Posterior cingulate gyrus (tissue), 11 donors: ENCODE measurements at regions of chr4 and their contacts with region 1.

Region 1: DNA sequence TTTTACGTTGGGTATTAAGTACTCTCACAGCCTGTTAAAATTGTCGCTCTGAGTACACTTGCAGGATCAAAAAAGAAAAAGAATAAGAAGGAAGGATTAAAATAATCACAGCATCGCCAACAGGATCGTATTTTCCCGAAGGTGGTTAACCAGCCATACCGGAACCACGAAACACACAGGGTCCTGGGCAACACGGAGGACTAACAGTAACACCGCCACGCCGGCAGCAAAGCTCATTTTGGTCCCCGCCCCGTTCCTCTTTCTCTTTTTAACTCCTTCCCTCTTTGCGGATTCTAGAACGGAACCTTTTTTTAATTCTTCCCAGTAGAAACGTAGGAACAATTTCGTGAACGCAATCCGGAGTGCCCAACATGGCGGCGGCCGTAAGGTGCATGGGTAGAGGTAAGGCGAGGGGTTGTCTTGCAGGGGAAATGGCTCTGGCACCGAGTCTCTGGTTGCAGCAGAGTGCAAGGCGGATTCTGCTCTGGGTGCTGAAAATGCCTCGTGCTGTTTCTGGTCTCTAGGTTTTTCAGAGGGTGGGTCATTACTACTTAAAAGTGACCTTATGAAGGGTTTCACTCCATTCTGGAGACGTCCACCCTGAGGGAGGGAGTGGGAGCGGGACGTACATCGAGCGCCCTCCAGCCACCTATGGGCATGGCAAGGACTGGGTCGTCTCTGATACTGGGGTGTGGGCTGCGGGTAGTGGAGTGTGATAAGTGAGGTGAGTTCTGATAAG is at the start of gene MRPL1:
- DNase-seq: peak; percentile 78 to 97 (median 86)

Region 2: DNA sequence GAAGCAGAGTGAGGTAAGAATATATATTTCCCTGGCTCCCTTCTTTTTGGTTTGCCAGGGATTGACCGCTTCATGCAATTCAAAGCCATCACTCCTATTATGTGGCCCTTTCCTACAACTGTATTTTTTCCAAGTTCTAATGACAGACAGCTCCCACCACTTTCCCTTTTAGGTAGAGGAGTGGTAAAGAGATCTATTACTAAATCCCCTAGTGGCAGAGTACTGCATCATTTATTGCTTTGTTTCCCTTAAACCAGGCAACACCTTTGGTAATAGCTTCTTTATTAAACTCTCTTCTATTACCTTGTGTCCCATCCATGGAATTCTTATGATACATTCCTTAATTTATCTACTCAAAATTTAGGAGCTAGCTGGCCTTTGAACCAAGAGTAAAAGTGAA is 134.2 kb before region 1 on chr4:
- intact Hi-C with region 1: no loop called
- DNase-seq: no peak

Region 3: GRCh38 chr4:77819843-77820648 is 42.6 kb before region 1 on chr4:
- intact Hi-C with region 1: loop called (anchors 2 kb)
- DNase-seq: peak; percentile 90 to 99 (median 94)

Region 4: DNA sequence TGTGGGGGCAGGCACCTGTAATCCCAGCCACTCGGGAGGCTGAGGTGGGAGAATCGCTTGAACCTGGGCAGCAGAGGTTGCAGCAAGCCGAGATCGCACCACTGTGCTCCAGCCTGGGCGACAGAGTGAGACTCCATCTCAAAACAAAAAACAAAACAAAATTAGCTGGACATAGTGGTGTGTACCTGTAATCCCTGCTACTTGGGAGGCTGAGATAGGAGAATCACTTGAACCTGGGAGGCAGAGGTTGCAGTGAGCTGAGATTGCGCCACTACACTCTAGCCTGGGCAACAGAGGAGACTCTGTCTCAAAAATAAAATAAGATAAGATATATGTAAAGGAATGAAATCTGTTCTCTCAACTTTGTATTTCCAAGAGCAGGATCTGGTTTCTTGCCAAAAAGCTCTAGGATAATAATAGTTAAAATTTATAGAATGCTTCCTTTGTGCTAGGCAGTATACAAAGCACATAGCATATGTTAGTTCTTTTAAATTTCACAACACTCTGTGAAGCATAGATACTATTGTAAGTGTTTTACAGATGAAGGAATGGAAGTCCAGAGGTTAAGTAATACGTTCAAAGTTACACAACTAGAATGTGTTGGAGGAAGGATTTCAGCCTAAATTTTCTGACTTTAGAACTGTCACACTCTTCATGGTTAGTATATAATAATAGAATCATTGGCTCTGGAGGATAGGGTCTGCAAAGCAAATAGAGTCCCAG is 10.2 kb after region 1 on chr4:
- intact Hi-C with region 1: loop called (anchors 1 kb)
- DNase-seq: no peak